CD4-positive, alpha-beta T cell (primary cell): ENCODE measurements at regions of chr22 and their contacts with region 1.

Region 1: GRCh38 chr22:41832553-41833368 is at the start of gene SREBF2:
- DNase-seq: peak; percentile 96 to 99 (median 98)
- ATAC-seq: peak; percentile 93
- H3K4me3 ChIP-seq: peak within 1 kb of the TSS; percentile 96
- H3K4me3 Mint-ChIP-seq: peak within 1 kb of the TSS; percentile 97
- H3K27ac ChIP-seq: peak within 1 kb of the TSS; percentile 89 to 98
- H3K27ac Mint-ChIP-seq: peak within 1 kb of the TSS; percentile 100
- H3K4me1 ChIP-seq: peaks cover 30% of the 10 kb centered on the region
- H3K4me1 Mint-ChIP-seq: peaks cover 43% of the 10 kb centered on the region
- H3K27me3 ChIP-seq: no peaks in the 10 kb centered on the region
- H3K27me3 Mint-ChIP-seq: no peaks in the 10 kb centered on the region
- CTCF ChIP-seq: no peak
- total RNA-seq, gene SREBF2: 67.2 to 69.9 TPM

Region 2: GRCh38 chr22:41697126-41697775 is 135.5 kb before region 1 on chr22:
- CTCF ChIA-PET with region 1: interaction called, 10 read pairs
- POLR2A ChIA-PET with region 1: no interaction called
- intact Hi-C with region 1: no loop called
- DNase-seq: peak; percentile 84 to 98 (median 92)
- ATAC-seq: peak; percentile 78
- H3K4me3 ChIP-seq: peak overlapping the region; percentile 24
- H3K4me3 Mint-ChIP-seq: peak overlapping the region; percentile 59
- H3K27ac ChIP-seq: no peak overlapping the region
- H3K27ac Mint-ChIP-seq: no peak overlapping the region
- H3K4me1 ChIP-seq: peaks cover 24% of the 10 kb centered on the region
- H3K4me1 Mint-ChIP-seq: peaks cover 12% of the 10 kb centered on the region
- H3K27me3 ChIP-seq: no peaks in the 10 kb centered on the region
- H3K27me3 Mint-ChIP-seq: no peaks in the 10 kb centered on the region
- CTCF ChIP-seq: peak; percentile 98

Region 3: DNA sequence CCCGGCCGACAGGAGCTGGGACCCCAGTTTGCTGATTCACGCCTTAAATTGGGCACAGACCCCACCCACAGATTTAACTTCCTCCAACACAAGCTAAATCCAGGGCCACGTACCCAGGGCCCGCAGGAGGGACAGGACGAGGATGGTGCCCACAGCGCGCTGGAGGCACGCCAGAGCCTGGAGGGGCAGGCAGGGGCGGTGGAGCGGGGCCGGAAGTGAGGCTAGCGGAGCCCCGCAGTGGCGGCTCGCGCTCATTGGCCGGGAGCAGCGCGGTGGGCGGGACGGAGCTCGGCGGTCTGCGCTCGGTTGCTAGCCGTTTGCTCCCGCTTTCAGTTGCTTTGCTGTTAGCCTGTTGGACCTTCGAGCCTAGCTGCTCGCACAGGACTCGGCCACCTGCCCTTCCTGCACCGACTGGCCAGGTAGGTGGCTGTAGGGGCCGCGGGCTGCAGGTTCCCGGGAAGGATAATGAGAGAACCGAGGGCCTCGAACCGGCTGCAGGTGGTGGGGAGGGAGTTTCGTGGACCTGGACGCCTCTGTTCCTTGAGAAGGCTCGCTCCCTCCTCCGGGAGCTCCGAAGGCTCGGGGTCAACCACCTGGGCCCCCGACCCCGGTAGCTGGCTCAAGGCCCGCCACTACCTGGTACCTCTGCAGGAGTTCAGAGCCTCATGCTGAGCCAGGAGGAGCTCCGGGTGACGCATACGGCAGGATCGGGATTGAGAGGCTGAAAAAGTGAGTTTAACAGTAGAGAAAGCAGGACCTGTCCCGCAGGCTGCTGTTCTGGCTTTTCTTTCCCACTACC is 32.2 kb before region 1 on chr22 and contains the start of gene CCDC134:
- CTCF ChIA-PET with region 1: no interaction called
- POLR2A ChIA-PET with region 1: interaction called, 92 read pairs
- intact Hi-C with region 1: loop called in 1 of 2 experiments (anchors 1 kb)
- DNase-seq: peak; percentile 85 to 95 (median 90)
- ATAC-seq: peak; percentile 95
- H3K4me3 ChIP-seq: peak within 1 kb of the TSS; percentile 80
- H3K4me3 Mint-ChIP-seq: peak within 1 kb of the TSS; percentile 98
- H3K27ac ChIP-seq: peak within 1 kb of the TSS; percentile 87 to 91
- H3K27ac Mint-ChIP-seq: peak within 1 kb of the TSS; percentile 100
- H3K4me1 ChIP-seq: peaks cover 34% of the 10 kb centered on the region
- H3K4me1 Mint-ChIP-seq: peaks cover 40% of the 10 kb centered on the region
- H3K27me3 ChIP-seq: no peaks in the 10 kb centered on the region
- H3K27me3 Mint-ChIP-seq: no peaks in the 10 kb centered on the region
- CTCF ChIP-seq: no peak
- total RNA-seq, gene CCDC134: 14.1 to 16.2 TPM

Region 4: GRCh38 chr22:41857155-41857859 is 24.5 kb after region 1 on chr22:
- CTCF ChIA-PET with region 1: interaction called, 17 read pairs
- POLR2A ChIA-PET with region 1: interaction called, 41 read pairs
- intact Hi-C with region 1: no loop called
- DNase-seq: peak; percentile 46 to 89 (median 63)
- ATAC-seq: peak; percentile 75
- H3K4me3 ChIP-seq: no peak overlapping the region
- H3K4me3 Mint-ChIP-seq: peak overlapping the region; percentile 13
- H3K27ac ChIP-seq: no peak overlapping the region
- H3K27ac Mint-ChIP-seq: peak overlapping the region; percentile 59
- H3K4me1 ChIP-seq: peaks cover 49% of the 10 kb centered on the region
- H3K4me1 Mint-ChIP-seq: peaks cover 45% of the 10 kb centered on the region
- H3K27me3 ChIP-seq: no peaks in the 10 kb centered on the region
- H3K27me3 Mint-ChIP-seq: no peaks in the 10 kb centered on the region
- CTCF ChIP-seq: peak; percentile 72

Region 5: DNA sequence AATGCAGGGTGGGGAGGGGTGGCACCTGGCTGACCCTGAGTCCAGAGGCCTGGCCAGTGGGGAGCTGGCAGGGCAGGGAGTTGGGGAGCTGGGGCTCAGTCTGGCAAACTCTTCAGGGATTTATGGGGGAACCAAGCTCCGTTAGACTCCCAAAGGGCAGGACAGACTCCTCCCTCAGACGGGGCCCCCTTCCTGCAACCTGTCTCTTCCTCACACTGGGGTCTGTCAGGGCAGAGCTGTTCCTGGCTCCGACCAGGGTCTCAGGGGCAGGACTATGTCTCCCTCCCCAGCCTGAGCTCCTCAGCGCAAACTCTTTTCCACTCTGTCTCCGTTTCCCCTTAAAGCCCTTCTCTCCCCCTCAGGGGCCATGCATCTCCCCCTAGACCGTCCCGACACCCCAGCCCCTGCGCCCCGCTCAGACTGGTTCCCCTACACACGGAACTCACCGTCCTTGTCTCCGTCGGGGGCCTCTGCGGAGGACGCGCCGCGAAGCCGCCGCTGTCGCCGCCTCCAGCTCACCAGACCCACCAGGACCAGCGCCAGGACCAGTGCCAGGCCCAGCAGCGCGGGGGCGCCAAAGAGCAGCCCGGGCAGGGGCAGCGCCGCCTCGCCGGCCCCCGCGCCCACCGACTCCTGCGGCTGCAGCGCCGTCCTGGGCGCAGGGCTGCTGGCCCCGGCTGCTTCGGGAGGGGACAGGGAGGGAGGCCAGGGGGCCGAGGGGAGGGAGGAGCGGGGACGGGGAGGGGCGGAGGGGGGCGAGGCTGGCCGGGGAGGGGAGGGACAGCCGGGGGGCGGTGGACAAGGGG is 93.1 kb after region 1 on chr22:
- CTCF ChIA-PET with region 1: interaction called, 4 read pairs
- POLR2A ChIA-PET with region 1: interaction called, 19 read pairs
- intact Hi-C with region 1: no loop called
- DNase-seq: peak; percentile 59 to 88 (median 76)
- ATAC-seq: peak; percentile 84
- H3K4me3 ChIP-seq: peak overlapping the region; percentile 45
- H3K4me3 Mint-ChIP-seq: peak overlapping the region; percentile 80
- H3K27ac ChIP-seq: no peak overlapping the region
- H3K27ac Mint-ChIP-seq: peak overlapping the region; percentile 55
- H3K4me1 ChIP-seq: peaks cover 30% of the 10 kb centered on the region
- H3K4me1 Mint-ChIP-seq: peaks cover 7% of the 10 kb centered on the region
- H3K27me3 ChIP-seq: peaks cover 0 to 9% of the 10 kb centered on the region in 2 experiments
- H3K27me3 Mint-ChIP-seq: peaks cover 9% of the 10 kb centered on the region
- CTCF ChIP-seq: peak; percentile 75

Region 6: DNA sequence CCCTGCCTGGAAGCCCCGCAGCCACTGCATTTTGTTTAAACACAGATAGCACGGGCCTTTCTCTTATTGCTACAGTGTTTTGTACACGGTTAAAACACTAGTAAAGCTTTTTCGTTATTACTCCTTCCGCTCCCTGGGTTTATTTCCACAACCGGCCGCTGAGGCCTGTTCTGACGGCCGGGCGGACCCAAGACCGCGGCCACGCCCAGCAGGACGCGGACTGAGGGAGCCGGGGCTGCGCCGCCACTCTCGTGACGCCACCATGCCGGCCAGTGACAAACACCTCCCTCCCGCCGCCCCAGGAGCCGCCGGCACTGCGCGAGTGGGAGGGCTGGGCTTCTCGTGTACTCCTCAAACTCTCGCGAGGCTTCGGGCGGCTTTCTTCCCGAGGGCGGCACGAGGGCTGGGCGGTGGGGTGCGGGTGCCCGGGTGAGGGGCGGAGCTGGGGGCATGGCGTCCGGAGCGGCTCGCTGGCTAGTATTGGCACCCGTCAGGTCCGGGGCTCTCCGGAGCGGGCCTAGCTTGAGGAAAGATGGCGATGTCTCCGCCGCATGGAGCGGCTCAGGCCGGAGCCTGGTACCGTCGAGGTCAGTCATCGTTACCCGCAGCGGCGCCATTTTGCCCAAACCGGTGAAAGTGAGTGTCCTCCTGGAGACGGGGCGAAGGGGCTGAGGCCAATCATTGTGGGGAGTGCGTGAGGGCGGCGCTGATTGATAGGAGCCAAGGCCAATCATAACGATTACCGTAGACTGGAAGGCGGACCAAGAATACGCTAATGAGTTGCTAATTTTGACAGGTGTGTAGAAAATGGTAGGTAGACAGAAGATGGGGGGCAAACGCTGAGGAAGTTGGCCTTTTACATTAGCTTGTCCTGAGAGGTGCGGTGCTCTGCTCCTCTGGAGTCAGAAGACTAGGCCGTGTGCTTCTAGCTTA is 246.8 kb after region 1 on chr22 and contains the start of gene SMDT1:
- CTCF ChIA-PET with region 1: no interaction called
- POLR2A ChIA-PET with region 1: interaction called, 18 read pairs
- intact Hi-C with region 1: no loop called
- DNase-seq: peak; percentile 96 to 99 (median 98)
- ATAC-seq: peak; percentile 91
- H3K4me3 ChIP-seq: peak within 1 kb of the TSS; percentile 73
- H3K4me3 Mint-ChIP-seq: peak within 1 kb of the TSS; percentile 93
- H3K27ac ChIP-seq: peak within 1 kb of the TSS; percentile 98 to 99
- H3K27ac Mint-ChIP-seq: peak within 1 kb of the TSS; percentile 97
- H3K4me1 ChIP-seq: peaks cover 50% of the 10 kb centered on the region
- H3K4me1 Mint-ChIP-seq: peaks cover 56% of the 10 kb centered on the region
- H3K27me3 ChIP-seq: no peaks in the 10 kb centered on the region
- H3K27me3 Mint-ChIP-seq: no peaks in the 10 kb centered on the region
- CTCF ChIP-seq: no peak
- total RNA-seq, gene SMDT1: 84.7 to 86.4 TPM